ENCODE measurements at regions of chr10 and their contacts with region 1.

Region 1: DNA sequence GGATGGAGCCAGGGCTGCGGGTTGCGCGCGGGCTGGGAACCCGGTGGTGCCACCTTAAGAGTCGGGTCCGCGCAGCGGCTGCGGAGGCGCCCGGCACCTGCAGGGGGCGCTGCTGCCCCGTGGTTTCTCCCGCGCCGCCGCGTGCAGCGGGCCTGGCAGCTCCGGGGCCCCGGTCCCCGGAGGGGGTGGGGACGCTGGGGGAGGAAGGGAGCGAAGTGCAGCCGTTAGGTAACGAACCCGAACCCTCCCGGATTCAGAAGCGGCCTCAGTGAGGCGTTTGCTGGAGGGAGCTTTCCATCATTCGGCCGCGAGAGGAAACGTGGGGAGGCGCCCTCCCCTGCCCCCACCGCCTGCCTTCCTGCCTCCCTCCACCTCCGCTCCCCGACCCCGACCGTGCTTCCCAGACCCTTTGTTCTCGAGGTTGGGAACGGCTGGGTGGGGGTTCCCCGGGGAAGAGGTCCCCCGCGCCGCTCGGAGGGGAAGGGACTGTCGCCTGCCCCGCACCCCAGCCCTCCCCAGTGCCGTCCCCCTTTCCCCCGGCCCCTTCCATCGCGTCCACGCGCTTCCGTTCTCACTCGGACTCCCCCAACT is 29.6 kb downstream of the SKIDA1 start:
- DNase-seq: peak; percentile 36 to 62
- ATAC-seq: peak; percentile 84 to 88
- H3K4me3 ChIP-seq: peak overlapping the region; percentile 59 to 84 (median 70)
- H3K27ac ChIP-seq: peak overlapping the region in 2 of 4 donors; percentile 51 to 58
- H3K4me1 ChIP-seq: peaks cover 4 to 29% of the 10 kb centered on the region in 2 donors
- H3K27me3 ChIP-seq: peaks cover 0 to 42% (median 40%) of the 10 kb centered on the region in 3 donors
- CTCF ChIP-seq: peak; percentile 87 to 99 (median 98)
- POLR2A ChIP-seq: no peak

Region 2: DNA sequence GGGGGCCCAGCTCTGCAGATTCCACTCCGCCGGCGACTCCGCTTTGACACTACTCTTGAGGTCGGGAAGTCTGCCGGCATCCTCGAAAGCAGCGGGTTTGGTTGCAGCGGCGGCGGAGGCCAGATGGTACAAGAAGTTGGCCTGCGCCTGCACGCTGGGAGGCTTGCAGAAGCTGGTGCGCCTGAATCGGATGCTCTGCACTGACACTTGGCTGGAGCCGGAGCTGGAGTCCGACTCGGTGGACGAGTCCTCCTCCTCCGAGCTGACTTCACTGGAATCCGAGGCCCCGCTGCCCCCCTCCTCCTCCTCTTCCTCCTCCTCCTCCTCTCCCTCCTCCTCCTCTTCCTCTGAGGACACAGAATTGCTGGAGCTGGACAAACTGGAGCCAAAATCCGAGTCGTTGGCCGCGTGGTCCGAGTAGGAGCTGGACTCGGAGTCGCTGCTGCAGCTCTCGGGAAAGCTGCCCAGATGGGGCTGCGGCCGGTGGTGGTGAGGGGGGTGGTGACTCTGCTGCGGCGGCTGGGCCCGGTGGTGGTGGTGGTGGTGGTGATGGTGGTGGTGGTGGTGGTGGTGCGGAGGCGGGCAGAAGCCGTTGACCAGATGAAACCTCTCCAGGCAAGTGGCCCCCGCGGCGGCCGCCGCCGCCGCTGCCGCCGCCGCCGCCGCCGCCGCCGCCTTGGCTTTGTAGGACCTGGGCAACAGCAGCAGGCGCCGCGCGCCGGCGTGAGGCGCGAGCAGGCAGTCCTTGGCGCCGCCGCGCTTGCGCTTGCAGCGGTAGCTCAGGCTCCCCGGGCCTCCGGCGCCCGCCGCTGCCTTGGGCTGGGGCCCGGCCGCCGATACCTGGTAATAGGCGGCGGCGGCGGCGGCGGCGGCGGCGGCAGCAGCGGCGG is 20.6 kb after region 1 on chr10:
- in situ Hi-C with region 1: no loop called
- intact Hi-C with region 1: loop called (anchors 2 kb)
- DNase-seq: peak; percentile 82 to 86
- ATAC-seq: peak; percentile 61 to 64
- H3K4me3 ChIP-seq: peak overlapping the region; percentile 63 to 72 (median 67)
- H3K27ac ChIP-seq: peak overlapping the region; percentile 68 to 98 (median 77)
- H3K4me1 ChIP-seq: peaks cover 33 to 34% of the 10 kb centered on the region in 2 donors
- H3K27me3 ChIP-seq: peaks cover 0 to 8% (median 4%) of the 10 kb centered on the region in 3 donors
- CTCF ChIP-seq: no peak
- POLR2A ChIP-seq: peak in 1 of 2 donors; percentile 23

Region 3: DNA sequence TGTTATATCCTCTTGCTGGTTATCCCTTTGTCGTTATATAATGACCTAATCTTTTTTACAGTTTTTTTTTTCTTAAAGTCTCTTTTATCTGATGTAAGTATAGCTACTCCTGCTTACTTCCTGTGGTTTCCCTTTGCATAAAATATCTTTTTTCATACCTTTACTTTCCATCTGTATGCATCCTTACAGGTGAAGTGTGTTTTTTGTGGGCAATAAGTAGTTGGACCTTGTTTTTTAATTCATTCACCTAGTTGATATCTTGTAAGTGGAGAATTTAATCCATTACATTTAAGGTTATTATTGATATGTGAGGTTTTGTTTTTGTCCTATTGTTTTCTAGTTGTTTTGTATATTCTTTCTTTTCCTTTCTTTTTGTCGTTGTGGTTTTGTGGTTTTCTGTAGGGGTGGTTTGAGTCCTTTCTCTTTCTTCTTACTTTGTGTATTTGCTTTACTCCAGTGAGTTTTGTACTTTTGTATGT is 206.8 kb after region 1 on chr10:
- in situ Hi-C with region 1: no loop called
- intact Hi-C with region 1: no loop called
- DNase-seq: no peak
- ATAC-seq: no peak
- H3K4me3 ChIP-seq: no peak overlapping the region
- H3K27ac ChIP-seq: no peak overlapping the region
- H3K4me1 ChIP-seq: peaks cover 0 to under 1% of the 10 kb centered on the region in 2 donors
- H3K27me3 ChIP-seq: no peaks in the 10 kb centered on the region
- CTCF ChIP-seq: no peak
- POLR2A ChIP-seq: no peak

Region 4: DNA sequence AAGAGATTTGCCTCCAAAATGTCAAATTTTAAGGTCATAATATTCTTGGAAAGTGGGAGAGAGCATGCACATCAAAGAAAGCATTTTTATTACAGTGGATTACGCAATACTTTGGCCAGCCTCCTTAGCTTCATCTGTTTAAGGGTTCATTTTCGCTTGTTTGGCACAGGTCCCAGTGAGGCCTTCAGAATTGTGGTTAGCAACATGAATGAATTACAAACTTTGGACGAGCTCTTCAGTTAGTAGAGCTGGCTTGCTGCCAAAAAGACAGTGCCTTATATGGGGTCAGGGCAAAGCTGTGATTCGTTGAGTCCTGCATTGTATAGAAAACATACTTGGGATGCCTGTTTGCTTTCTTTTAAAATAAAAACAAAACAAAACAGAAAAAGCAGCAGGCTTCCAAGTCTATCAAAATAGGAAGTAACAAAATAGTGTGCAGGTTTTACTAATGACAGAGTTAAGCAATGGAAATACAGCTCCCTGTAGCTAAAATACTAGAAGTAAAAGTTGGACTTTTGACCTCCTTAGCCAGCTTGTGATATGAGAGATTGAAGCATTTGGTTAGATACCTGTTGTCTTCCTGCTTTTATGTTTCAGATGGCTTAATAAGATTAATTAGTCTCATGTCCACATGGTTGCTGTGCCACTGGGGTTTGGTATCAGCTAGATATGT is 229.0 kb after region 1 on chr10:
- in situ Hi-C with region 1: loop called (anchors 5 to 10 kb)
- intact Hi-C with region 1: no loop called
- DNase-seq: peak; percentile 70 to 80
- ATAC-seq: peak; percentile 81 to 83
- H3K4me3 ChIP-seq: no peak overlapping the region
- H3K27ac ChIP-seq: no peak overlapping the region
- H3K4me1 ChIP-seq: peaks cover 11 to 14% of the 10 kb centered on the region in 2 donors
- H3K27me3 ChIP-seq: no peaks in the 10 kb centered on the region
- CTCF ChIP-seq: no peak
- POLR2A ChIP-seq: no peak

Region 5: DNA sequence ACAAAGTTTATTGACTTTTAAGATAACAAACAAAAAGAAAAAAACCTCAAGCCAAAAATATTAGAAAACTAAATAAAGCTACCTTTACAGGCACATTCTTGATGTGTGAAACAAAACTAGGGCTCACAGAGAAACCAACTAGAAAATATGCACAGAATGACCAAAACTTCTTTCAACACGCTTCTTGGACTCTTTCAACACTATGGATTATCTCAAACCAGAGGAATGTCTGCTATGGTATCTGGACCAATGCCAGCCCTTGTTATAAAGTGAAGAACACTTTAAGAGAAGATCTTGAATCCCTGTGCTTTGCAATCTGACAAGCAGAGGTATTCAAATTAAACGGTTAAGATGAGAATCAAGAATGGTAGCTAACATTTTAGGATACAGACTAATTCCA is 431.1 kb after region 1 on chr10:
- in situ Hi-C with region 1: loop called in 3 of 4 experiments (anchors 25 kb)
- intact Hi-C with region 1: no loop called
- DNase-seq: no peak
- ATAC-seq: no peak
- H3K4me3 ChIP-seq: no peak overlapping the region
- H3K27ac ChIP-seq: no peak overlapping the region
- H3K4me1 ChIP-seq: no peaks in the 10 kb centered on the region
- H3K27me3 ChIP-seq: no peaks in the 10 kb centered on the region
- CTCF ChIP-seq: no peak
- POLR2A ChIP-seq: no peak

Region 6: GRCh38 chr10:21989453-21990154 is 493.8 kb after region 1 on chr10:
- in situ Hi-C with region 1: loop called in 1 of 4 experiments (anchors 25 kb)
- intact Hi-C with region 1: no loop called
- DNase-seq: no peak
- ATAC-seq: peak; percentile 60 to 73
- H3K4me3 ChIP-seq: no peak overlapping the region
- H3K27ac ChIP-seq: no peak overlapping the region
- H3K4me1 ChIP-seq: no peaks in the 10 kb centered on the region
- H3K27me3 ChIP-seq: no peaks in the 10 kb centered on the region
- CTCF ChIP-seq: peak in 4 of 5 experiments; percentile 9 to 57 (median 33)
- POLR2A ChIP-seq: no peak

Region 7: GRCh38 chr10:22228943-22229801 is 733.3 kb after region 1 on chr10:
- in situ Hi-C with region 1: no loop called
- intact Hi-C with region 1: loop called (anchors 10 kb)
- DNase-seq: peak; percentile 71 to 77
- ATAC-seq: peak; percentile 91 to 92
- H3K4me3 ChIP-seq: peak overlapping the region; percentile 72 to 92 (median 82)
- H3K27ac ChIP-seq: peak overlapping the region; percentile 83 to 95 (median 90)
- H3K4me1 ChIP-seq: peaks cover 3 to 7% of the 10 kb centered on the region in 2 donors
- H3K27me3 ChIP-seq: no peaks in the 10 kb centered on the region
- CTCF ChIP-seq: no peak
- POLR2A ChIP-seq: peak in 1 of 2 donors; percentile 14

Region 8: GRCh38 chr10:22988581-22989360 is 1492.9 kb after region 1 on chr10:
- in situ Hi-C with region 1: loop called in 3 of 4 experiments (anchors 25 kb)
- intact Hi-C with region 1: loop called (anchors 2 kb)
- DNase-seq: peak; percentile 32 to 35
- ATAC-seq: peak; percentile 71 to 77
- H3K4me3 ChIP-seq: no peak overlapping the region
- H3K27ac ChIP-seq: no peak overlapping the region
- H3K4me1 ChIP-seq: peaks cover 0 to 4% of the 10 kb centered on the region in 2 donors
- H3K27me3 ChIP-seq: no peaks in the 10 kb centered on the region
- CTCF ChIP-seq: peak; percentile 78 to 90 (median 85)
- POLR2A ChIP-seq: no peak

Measured in gastrocnemius medialis (tissue), 4 donors.